GM12878 (cell line): ENCODE measurements at regions of chr12 and their contacts with region 1.

Region 1: DNA sequence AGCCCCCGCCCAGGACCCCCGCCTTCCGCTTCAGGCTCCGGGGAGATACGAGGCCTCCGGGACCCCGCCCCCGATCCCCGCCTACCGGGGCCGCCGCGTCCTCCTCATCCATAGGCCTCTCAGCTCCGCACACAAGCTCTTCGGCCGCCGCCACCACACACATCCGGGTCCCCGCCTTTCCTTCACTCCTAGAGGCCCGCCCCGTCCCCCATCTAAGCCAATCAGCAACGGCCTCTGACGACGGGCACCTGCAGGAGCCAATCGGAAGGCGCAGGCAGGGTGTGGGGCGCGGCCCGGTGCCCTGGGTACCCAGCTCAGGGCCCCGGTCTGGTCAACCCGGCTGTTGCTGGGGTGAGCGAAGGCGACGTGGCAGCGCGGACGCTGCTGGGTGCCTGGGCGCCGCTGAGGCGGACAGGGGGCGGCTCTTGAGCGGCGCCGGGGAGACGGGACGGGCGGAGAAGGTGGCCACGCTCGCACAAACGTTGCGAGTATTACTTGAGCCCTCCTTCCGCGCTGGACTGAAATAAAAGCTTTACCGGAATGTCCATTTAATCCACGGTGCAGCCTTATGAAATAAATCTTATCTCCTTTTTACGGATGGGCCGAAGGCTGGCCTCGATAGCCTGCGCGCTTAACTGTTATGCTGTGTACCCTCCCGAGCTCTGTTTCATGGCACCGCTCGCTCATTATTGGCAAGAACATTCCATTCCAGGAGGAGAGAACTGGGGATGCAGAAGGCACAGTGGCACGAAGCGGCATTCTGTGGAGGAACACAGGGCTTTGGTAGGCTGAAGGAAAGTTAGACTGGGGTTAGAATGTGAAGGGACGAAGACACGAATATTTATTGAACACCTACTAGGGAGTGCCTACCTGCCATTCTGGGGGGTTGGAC is at the start of gene SPRYD3:
- DNase-seq: peak; percentile 77
- ATAC-seq: peak; percentile 99
- H3K4me3 ChIP-seq: peak within 1 kb of the TSS; percentile 90
- H3K27ac ChIP-seq: peak within 1 kb of the TSS; percentile 74
- H3K4me1 ChIP-seq: no peaks in the 10 kb centered on the region; the same call in none of the 2 replicates
- H3K27me3 ChIP-seq: no peaks in the 10 kb centered on the region
- CTCF ChIP-seq: no peak
- EP300 ChIP-seq: no peak
- POLR2A ChIP-seq: peak; percentile 95
- RAD21 ChIP-seq: no peak
- polyA plus RNA-seq, gene SPRYD3: 2.3 to 3.5 TPM

Region 2: GRCh38 chr12:53005986-53006809 is 73.3 kb before region 1 on chr12 and contains the start of gene EIF4B:
- CTCF ChIA-PET with region 1: no interaction called
- POLR2A ChIA-PET with region 1: interaction called, 12 read pairs
- RAD21 ChIA-PET with region 1: interaction called, 3 read pairs
- SMC1A ChIA-PET with region 1: no interaction called
- in situ Hi-C with region 1: no loop called
- intact Hi-C with region 1: loop called (anchors 2 kb)
- DNase-seq: peak; percentile 99
- ATAC-seq: peak; percentile 95
- H3K4me3 ChIP-seq: peak within 1 kb of the TSS; percentile 91
- H3K27ac ChIP-seq: peak within 1 kb of the TSS; percentile 95
- H3K4me1 ChIP-seq: peaks cover 2% of the 10 kb centered on the region; the same call in 1 of the 2 replicates
- H3K27me3 ChIP-seq: no peaks in the 10 kb centered on the region
- CTCF ChIP-seq: no peak
- EP300 ChIP-seq: 0 out of 4 replicates have a peak, but pooled peaks have one; percentile 30 to 43
- POLR2A ChIP-seq: peak; percentile 81
- RAD21 ChIP-seq: no peak
- polyA plus RNA-seq, gene EIF4B: 133 to 144 TPM